ENCODE measurements at regions of chr1 and their contacts with region 1.

Region 1: GRCh38 chr1:108320842-108321241 is 77.0 kb upstream of the NBPF4 start:
- DNase-seq: no peak
- H3K4me3 ChIP-seq: no peak overlapping the region
- H3K27ac ChIP-seq: no peak overlapping the region
- H3K4me1 ChIP-seq: no peaks in the 10 kb centered on the region
- H3K27me3 ChIP-seq: peaks cover 3% of the 10 kb centered on the region
- CTCF ChIP-seq: no peak

Region 2: DNA sequence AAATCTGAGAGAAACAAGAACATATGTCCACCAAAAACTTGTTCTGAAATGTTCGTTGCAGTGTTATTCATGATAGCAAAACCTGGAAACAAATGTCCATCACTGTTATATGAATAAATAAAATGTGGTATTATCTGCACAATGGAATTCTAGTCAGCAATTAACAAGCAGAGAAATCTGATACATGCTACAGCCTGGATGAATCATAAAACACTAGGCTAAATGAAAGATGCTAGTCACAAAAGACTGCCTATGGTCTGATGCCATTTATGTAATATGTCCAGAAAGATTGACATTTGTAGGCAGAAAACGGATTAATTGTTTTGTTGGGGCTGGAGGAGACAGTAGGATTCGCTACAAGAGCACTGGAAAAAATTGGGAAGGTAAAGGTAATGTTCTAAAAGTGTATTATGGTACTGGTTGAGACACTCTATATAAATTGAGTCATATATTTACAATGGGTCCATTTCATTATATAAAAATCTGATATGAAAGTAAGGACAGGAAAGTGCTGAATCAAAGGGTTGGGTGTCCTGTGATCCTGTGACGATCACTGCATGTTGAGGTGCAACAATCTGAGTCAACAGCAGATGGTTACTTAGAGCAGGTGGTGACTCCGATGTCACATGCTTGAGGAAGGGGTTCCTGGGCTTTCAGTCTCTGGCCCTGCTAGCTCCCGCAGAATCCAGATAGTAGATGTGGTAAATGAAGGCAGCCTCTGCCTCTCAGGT is 25.1 kb after region 1 on chr1:
- CTCF ChIA-PET with region 1: no interaction called
- dilution Hi-C with region 1: no loop called
- in situ Hi-C with region 1: no loop called
- intact Hi-C with region 1: loop called (anchors 2 kb)
- DNase-seq: no peak
- H3K4me3 ChIP-seq: no peak overlapping the region
- H3K27ac ChIP-seq: no peak overlapping the region
- H3K4me1 ChIP-seq: no peaks in the 10 kb centered on the region
- H3K27me3 ChIP-seq: no peaks in the 10 kb centered on the region
- CTCF ChIP-seq: no peak

Region 3: DNA sequence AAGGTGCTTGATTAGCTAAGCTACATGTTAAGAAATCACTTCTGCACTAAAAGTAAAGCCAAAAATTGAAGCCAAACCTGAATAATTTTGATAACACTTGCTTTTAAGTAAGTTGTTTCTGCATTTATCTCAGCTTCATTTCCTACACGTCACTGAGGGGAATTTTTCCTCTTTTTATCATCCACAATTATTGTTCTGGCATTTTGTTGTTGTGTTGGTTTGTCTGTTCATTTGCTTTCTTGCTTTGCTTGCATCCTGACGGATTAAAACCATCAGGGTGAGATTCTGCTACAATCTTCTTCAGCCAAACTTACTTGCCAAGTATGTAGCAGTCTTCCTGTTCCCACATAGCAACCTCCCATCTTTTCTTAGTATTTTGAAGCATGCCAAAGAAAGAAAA is 221.0 kb after region 1 on chr1:
- CTCF ChIA-PET with region 1: no interaction called
- dilution Hi-C with region 1: no loop called
- in situ Hi-C with region 1: no loop called
- intact Hi-C with region 1: no loop called
- DNase-seq: no peak
- H3K4me3 ChIP-seq: no peak overlapping the region
- H3K27ac ChIP-seq: no peak overlapping the region
- H3K4me1 ChIP-seq: no peaks in the 10 kb centered on the region
- H3K27me3 ChIP-seq: no peaks in the 10 kb centered on the region
- CTCF ChIP-seq: no peak